Adrenal gland (tissue), 19 donors: ENCODE measurements at regions of chr9 and their contacts with region 1.

Region 1: DNA sequence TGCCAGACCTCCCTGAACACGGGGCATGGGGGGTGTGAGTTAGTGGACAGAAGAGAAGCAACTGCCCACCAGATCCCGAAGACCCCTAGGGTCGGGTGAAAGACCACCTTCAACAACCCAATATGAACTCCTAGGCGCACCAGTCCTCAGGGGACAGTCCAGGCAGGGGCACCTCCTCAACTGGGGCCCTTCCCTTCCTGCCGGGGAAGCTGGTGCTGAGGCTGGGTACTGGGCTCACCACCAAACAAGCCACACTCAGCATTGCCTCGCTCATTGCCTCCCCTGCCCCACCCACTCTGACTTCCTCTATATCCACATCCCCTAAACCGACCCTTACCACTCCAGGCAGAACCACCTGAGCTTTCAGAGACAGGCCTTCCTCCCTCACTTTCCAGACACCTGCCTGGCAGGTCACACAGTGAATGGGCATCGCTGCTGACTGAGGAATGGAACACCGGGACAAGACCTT is 42.5 kb downstream of the SEMA4D start:
- DNase-seq: no peak
- H3K4me3 ChIP-seq: no peak overlapping the region
- H3K27ac ChIP-seq: no peak overlapping the region
- H3K4me1 ChIP-seq: no peaks in the 10 kb centered on the region
- H3K27me3 ChIP-seq: no peaks in the 10 kb centered on the region
- CTCF ChIP-seq: no peak
- POLR2A ChIP-seq: no peak

Region 2: GRCh38 chr9:89237078-89237507 is 218.3 kb before region 1 on chr9:
- intact Hi-C with region 1: no loop called
- DNase-seq: no peak
- H3K4me3 ChIP-seq: no peak overlapping the region
- H3K27ac ChIP-seq: no peak overlapping the region
- H3K4me1 ChIP-seq: no peaks in the 10 kb centered on the region
- H3K27me3 ChIP-seq: no peaks in the 10 kb centered on the region
- CTCF ChIP-seq: no peak
- POLR2A ChIP-seq: no peak

Region 3: DNA sequence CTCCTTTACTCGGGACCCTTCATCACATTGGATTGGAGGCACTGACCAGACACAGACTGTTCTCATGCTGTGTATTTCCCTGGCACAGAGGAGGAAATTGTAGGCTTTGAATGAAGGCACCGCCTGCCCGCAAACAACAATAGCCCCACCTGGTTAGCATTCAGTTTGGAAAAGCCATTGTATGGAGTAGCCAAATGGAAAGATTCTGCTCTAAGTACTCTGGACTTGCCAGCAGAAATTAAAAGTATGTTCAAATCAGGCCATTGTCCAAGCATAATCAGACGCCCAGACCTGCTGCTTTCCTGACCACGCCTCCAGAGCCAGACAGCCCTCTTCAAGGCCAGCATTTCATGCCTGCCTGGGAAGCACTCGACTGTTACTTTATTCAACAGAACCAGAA is 50.5 kb after region 1 on chr9:
- intact Hi-C with region 1: loop called in 1 of 2 experiments (anchors 10 kb)
- DNase-seq: peak; percentile 61 to 84 (median 80)
- H3K4me3 ChIP-seq: no peak overlapping the region
- H3K27ac ChIP-seq: peak overlapping the region; percentile 0 to 81 (median 64)
- H3K4me1 ChIP-seq: peaks cover 28 to 40% of the 10 kb centered on the region in 2 donors
- H3K27me3 ChIP-seq: no peaks in the 10 kb centered on the region
- CTCF ChIP-seq: no peak
- POLR2A ChIP-seq: peak in 1 of 2 donors; percentile 38

Region 4: GRCh38 chr9:89750147-89750861 is 294.9 kb after region 1 on chr9:
- intact Hi-C with region 1: no loop called
- DNase-seq: no peak
- H3K4me3 ChIP-seq: no peak overlapping the region
- H3K27ac ChIP-seq: no peak overlapping the region
- H3K4me1 ChIP-seq: peaks cover 0 to 7% of the 10 kb centered on the region in 2 donors
- H3K27me3 ChIP-seq: no peaks in the 10 kb centered on the region
- CTCF ChIP-seq: no peak
- POLR2A ChIP-seq: no peak